Tibial artery (tissue), 4 donors: ENCODE measurements at regions of chr16 and their contacts with region 1.

Region 1: GRCh38 chr16:88437373-88437964 is 15.6 kb upstream of the ZFPM1 start:
- DNase-seq: no peak
- H3K4me3 ChIP-seq: no peak overlapping the region
- H3K27ac ChIP-seq: no peak overlapping the region
- H3K4me1 ChIP-seq: peaks cover 0 to 7% (median 0%) of the 10 kb centered on the region in 4 donors
- H3K27me3 ChIP-seq: peaks cover 0 to 31% of the 10 kb centered on the region in 2 donors
- CTCF ChIP-seq: peak; percentile 87 to 90

Region 2: DNA sequence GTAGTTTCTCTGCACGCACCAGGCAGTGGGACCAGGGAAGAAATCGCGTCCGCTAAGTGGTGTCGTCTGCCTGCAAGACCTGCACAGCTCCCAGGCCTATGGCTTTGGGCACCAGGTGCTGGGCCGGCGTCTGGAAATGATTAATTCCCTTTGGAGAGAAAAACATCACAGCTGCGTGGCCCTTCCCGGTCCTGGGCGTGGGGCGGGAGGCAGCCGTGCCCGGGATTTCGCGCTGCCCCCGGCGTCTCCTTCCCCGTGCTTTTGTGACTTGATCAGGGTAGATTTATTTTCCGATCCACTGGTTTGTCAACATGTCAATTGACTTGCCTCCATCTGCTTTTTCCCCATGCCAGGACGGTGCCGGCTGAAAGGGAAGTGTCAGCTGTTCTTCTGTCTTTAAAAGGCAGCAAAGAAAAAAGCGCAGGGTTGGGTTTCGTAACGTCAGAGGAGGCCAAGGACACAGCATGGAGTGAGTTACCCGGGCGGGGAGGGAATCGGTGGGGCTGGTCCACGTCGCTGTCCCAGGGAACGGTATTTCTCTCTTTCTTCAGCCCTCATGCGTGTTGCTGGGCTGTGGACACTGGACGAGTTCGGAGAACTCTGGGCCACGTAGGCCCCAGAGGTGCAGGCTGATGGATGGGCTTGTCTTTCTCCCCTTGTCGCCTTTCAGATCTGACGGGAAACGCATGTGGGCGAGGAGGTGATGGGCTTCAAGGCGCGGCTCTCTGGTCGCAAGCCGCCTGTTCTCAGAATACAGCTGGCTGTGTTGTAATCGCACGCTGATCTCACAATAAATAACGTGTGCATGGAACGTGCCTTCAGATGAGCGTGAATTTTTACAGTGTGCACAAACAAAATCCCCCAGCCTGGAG is 242.8 kb before region 1 on chr16:
- intact Hi-C with region 1: loop called (anchors 2 kb)
- DNase-seq: peak in 1 of 2 donors; percentile 44
- H3K4me3 ChIP-seq: no peak overlapping the region
- H3K27ac ChIP-seq: no peak overlapping the region
- H3K4me1 ChIP-seq: no peaks in the 10 kb centered on the region
- H3K27me3 ChIP-seq: no peaks in the 10 kb centered on the region
- CTCF ChIP-seq: no peak

Region 3: DNA sequence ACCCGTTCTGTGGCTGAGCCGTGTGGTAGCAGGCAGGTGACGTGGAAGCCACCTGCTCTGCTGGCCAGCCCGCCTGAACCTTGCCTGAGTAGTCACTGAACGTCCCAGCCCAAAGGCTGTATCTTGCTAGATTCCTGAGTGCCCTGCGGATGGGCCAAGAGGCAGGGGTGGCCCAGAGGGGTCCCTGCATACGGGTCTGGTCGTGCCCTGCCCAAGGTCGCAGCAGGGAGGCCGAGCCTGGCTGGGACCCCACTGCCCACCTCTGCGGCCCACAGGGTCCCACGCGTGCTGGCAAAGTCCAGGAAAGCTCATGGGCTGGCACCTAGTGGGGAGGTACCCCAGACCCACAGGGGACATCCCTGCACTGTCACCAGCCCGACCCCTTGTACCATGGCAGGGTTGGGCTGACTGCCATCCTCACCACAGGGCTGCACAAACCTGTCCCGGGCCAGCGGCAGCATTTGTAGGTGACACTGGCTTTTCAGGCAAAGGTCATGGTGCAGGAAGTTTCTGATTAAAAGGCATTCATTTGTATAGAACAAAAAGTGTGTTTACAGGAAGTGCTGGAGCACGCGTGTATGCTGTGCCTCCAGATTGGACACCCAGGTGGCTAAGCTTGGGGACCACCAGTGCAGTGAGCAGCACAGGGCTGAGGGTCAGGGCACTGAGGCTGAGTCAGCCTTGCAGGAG is 87.6 kb after region 1 on chr16:
- intact Hi-C with region 1: no loop called
- DNase-seq: no peak
- H3K4me3 ChIP-seq: no peak overlapping the region
- H3K27ac ChIP-seq: no peak overlapping the region
- H3K4me1 ChIP-seq: peaks cover 0 to 24% (median 4%) of the 10 kb centered on the region in 4 donors
- H3K27me3 ChIP-seq: peaks cover 0 to 62% of the 10 kb centered on the region in 2 donors
- CTCF ChIP-seq: no peak